Common myeloid progenitor, CD34-positive (primary cell): ENCODE measurements at regions of chr2 and their contacts with region 1.

Region 1: DNA sequence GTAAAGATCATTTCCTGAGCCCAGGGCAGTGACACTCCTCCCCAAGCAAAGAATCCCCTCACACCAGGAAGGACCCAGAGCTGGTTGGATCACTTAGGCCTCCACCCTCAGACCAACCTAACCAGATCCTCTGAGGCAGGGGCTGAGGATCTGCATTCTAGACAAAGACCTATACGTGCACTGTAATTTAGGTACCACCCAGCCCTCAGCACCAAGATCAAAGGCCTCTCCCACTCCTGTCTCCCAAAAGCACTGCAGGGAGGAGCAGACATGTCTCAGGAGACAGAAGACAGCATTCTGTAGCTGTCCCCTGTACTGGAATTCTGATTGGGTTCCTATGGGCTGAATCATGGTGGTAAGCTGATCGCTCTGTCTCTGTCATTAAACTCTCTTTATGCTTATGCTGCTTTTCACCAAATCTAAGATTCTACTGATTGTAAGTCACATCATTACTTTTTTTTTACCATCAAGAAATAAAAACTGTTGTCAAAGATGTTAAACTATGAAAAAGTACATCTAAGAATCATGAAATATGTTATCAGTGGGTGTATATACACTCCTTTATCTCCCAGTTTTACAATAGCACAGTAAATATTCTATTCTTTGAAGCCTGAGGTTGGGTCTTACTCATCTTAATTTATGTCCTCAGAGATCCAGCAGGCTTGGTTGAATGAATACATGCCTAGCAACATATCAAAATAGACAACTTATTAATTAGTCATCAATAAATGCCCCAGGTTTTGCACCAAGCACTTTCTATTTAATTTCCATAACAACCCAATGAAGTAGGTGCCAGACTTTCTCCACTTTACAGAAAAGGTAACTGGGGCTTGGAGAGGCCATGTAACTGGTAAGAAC is 28.3 kb downstream of the MCFD2 start:
- DNase-seq: no peak
- H3K4me3 ChIP-seq: no peak overlapping the region
- H3K27ac ChIP-seq: no peak overlapping the region
- H3K4me1 ChIP-seq: no peaks in the 10 kb centered on the region
- H3K27me3 ChIP-seq: no peaks in the 10 kb centered on the region

Region 2: GRCh38 chr2:46657042-46657504 is 230.2 kb before region 1 on chr2:
- CTCF ChIA-PET with region 1: interaction called, 14 read pairs
- POLR2A ChIA-PET with region 1: no interaction called
- DNase-seq: peak; percentile 35 to 58 (median 53)
- H3K4me3 ChIP-seq: no peak overlapping the region
- H3K27ac ChIP-seq: no peak overlapping the region
- H3K4me1 ChIP-seq: no peaks in the 10 kb centered on the region
- H3K27me3 ChIP-seq: peaks cover 0 to 2% (median 0%) of the 10 kb centered on the region in 5 experiments

Region 3: GRCh38 chr2:46876741-46877384 is 10.4 kb before region 1 on chr2:
- CTCF ChIA-PET with region 1: interaction called, 28 read pairs
- POLR2A ChIA-PET with region 1: no interaction called
- DNase-seq: peak; percentile 61 to 74 (median 74)
- H3K4me3 ChIP-seq: no peak overlapping the region
- H3K27ac ChIP-seq: no peak overlapping the region
- H3K4me1 ChIP-seq: peaks cover 0 to 12% (median 9%) of the 10 kb centered on the region in 4 experiments
- H3K27me3 ChIP-seq: peaks cover 0 to 2% (median 0%) of the 10 kb centered on the region in 5 experiments